ENCODE measurements at regions of chr14 and their contacts with region 1.

Region 1: GRCh38 chr14:63632932-63633514 is 8.6 kb downstream of the WDR89 start:
- DNase-seq: peak in 3 of 10 donors; percentile 53 to 64 (median 58)
- ATAC-seq: peak; percentile 89 to 91
- H3K4me3 Mint-ChIP-seq: no peak overlapping the region
- H3K27ac Mint-ChIP-seq: peak overlapping the region in 2 of 10 donors; percentile 6 to 68
- H3K4me1 Mint-ChIP-seq: peaks cover 21 to 67% (median 49%) of the 10 kb centered on the region in 4 donors
- H3K27me3 Mint-ChIP-seq: no peaks in the 10 kb centered on the region

Region 2: DNA sequence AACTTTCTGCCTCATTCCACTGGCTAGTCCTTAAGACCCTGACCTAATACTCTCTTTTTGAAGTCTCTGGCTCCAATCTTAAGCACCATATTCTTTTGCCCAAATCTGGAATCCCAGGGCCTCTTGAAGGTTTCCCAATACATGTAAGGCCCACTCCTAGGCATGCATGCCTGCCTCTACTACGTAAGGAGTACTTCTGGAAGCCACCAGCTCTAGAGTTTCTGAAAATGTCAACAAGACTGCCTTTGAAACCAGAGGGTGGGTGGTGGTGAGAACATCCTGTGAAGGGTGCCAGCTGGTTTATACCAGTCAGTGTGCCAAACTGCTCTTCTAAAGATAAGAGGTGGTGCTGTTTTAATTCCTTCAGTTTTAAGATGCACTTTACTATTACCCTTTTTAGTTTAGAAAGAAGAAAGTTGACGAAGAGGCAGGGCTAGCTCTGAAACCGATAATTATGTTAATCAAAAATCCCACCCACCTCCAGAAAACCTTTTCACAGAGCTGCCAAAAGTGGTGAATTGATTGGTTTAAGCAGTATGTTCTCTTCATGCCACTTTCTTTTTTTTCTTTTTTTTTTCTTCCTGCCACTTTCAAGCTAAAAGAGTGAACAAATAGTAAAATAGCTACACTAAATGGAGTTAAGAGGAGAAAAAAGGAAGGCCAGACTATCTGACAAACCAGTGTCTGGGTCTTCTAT is 17.4 kb after region 1 on chr14:
- POLR2A ChIA-PET with region 1: interaction called, 138 read pairs
- DNase-seq: peak; percentile 26 to 90 (median 73)
- ATAC-seq: peak; percentile 97
- H3K4me3 Mint-ChIP-seq: peak overlapping the region; percentile 61 to 88 (median 82)
- H3K27ac Mint-ChIP-seq: peak overlapping the region; percentile 99 to 100 (median 99)
- H3K4me1 Mint-ChIP-seq: peaks cover 20 to 63% (median 40%) of the 10 kb centered on the region in 4 donors
- H3K27me3 Mint-ChIP-seq: no peaks in the 10 kb centered on the region